BJ (cell line): ENCODE measurements at regions of chr10 and their contacts with region 1.

Region 1: GRCh38 chr10:79929409-79929904 is 19.4 kb downstream of the SFTPD start:
- DNase-seq: no peak
- H3K4me3 ChIP-seq: no peak overlapping the region
- H3K27me3 ChIP-seq: no peaks in the 10 kb centered on the region
- CTCF ChIP-seq: peak; percentile 93

Region 2: GRCh38 chr10:79562135-79562756 is 367.2 kb before region 1 on chr10:
- CTCF ChIA-PET with region 1: interaction called, 11 read pairs
- POLR2A ChIA-PET with region 1: no interaction called
- DNase-seq: no peak
- H3K4me3 ChIP-seq: no peak overlapping the region
- H3K27me3 ChIP-seq: no peaks in the 10 kb centered on the region
- CTCF ChIP-seq: peak; percentile 94